Activated CD4-positive, alpha-beta T cell treated with anti-CD3 and anti-CD28 coated beads, Interleukin-2, amount 10 ng/mL, durations not matched to agents 24 days and 14 days (primary cell): ENCODE measurements at regions of chrX and their contacts with region 1.

Region 1: GRCh38 chrX:39613482-39613921 is 484.3 kb downstream of the BCOR start:
- DNase-seq: peak; percentile 63
- H3K4me3 Mint-ChIP-seq: peak overlapping the region; percentile 90
- H3K27ac Mint-ChIP-seq: peak overlapping the region; percentile 98
- H3K4me1 Mint-ChIP-seq: peaks cover 26% of the 10 kb centered on the region
- H3K27me3 Mint-ChIP-seq: no peaks in the 10 kb centered on the region

Region 2: DNA sequence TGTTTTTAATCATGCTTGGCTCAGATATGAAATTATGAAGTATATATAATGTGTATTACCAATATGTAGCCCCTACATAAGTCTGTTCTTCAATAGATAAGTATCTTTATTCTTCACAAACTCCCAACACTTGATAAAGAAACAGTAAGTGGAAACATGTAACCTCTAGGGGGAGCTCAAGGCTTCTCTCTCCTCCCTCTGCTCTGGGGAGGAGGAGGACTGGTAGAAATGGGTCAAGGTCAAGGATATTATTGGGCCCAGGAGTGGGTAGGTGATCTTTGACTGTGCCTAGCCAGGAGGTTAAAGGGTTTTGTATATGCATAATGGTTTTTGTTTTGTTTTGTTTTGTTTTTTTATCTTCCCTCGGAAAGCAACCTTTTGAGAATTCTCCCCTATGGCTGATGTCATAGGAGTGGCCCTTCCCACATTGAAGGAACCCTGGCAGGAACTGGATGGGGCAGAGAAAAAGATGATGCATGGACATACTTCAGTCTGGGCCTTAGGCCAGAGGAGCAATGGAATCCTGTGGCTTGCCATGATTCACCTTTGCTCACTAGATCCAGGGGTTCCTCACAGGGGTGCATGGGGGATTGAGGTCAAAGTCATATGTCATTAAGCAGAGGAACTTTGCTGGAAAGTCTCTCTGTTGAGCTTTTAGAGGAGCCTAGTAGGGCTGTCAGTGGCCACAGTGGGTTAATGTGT is 351.9 kb before region 1 on chrX:
- intact Hi-C with region 1: loop called (anchors 1 kb)
- DNase-seq: peak; percentile 74
- H3K4me3 Mint-ChIP-seq: no peak overlapping the region
- H3K27ac Mint-ChIP-seq: peak overlapping the region; percentile 78
- H3K4me1 Mint-ChIP-seq: peaks cover 34% of the 10 kb centered on the region
- H3K27me3 Mint-ChIP-seq: no peaks in the 10 kb centered on the region

Region 3: GRCh38 chrX:39527025-39527424 is 86.5 kb before region 1 on chrX:
- intact Hi-C with region 1: no loop called
- DNase-seq: no peak
- H3K4me3 Mint-ChIP-seq: no peak overlapping the region
- H3K27ac Mint-ChIP-seq: no peak overlapping the region
- H3K4me1 Mint-ChIP-seq: no peaks in the 10 kb centered on the region
- H3K27me3 Mint-ChIP-seq: no peaks in the 10 kb centered on the region

Region 4: GRCh38 chrX:39578354-39578869 is 35.1 kb before region 1 on chrX:
- intact Hi-C with region 1: loop called (anchors 1 kb)
- DNase-seq: peak; percentile 76
- H3K4me3 Mint-ChIP-seq: peak overlapping the region; percentile 60
- H3K27ac Mint-ChIP-seq: peak overlapping the region; percentile 91
- H3K4me1 Mint-ChIP-seq: peaks cover 23% of the 10 kb centered on the region
- H3K27me3 Mint-ChIP-seq: no peaks in the 10 kb centered on the region

Region 5: DNA sequence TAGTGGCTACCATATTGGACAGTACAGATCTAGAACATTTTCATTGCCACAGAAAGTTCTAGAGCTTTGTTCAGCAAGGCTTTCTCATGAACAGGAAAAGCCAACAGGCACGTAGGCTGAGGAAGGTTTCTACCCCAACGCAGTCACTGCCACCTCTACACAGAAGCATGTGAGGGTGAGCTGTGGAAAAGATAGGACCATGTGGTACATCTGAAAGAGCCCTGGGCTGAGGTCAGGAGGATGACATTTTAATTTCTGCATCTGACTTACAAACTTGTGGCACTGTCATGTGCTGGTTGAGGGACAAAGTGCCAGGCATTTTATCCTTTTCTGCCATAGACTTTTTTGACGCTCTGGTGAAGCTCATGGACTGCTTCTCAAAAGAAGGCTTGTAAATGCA is 30.0 kb after region 1 on chrX:
- intact Hi-C with region 1: loop called (anchors 1 kb)
- DNase-seq: no peak
- H3K4me3 Mint-ChIP-seq: no peak overlapping the region
- H3K27ac Mint-ChIP-seq: no peak overlapping the region
- H3K4me1 Mint-ChIP-seq: peaks cover 10% of the 10 kb centered on the region
- H3K27me3 Mint-ChIP-seq: no peaks in the 10 kb centered on the region

Region 6: GRCh38 chrX:39705299-39705698 is 91.8 kb after region 1 on chrX:
- intact Hi-C with region 1: no loop called
- DNase-seq: no peak
- H3K4me3 Mint-ChIP-seq: no peak overlapping the region
- H3K27ac Mint-ChIP-seq: no peak overlapping the region
- H3K4me1 Mint-ChIP-seq: no peaks in the 10 kb centered on the region
- H3K27me3 Mint-ChIP-seq: no peaks in the 10 kb centered on the region